ENCODE measurements at regions of chr1 and their contacts with region 1.

Region 1: DNA sequence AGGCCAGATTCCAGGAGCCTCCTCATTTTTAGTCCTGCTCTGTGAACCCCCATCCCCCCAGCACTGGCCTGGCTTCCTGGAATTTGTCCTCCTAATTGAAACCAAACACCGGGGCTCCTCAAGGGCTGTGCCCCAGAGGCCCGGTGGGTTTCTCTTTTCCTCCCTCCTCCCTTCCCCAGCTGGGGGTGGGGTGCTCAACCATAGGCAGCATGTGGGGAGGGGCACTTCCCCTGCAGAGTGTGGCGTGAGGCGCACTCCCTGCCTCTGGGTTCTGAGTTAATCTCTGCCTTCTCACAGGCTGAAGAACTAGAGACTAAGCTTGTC is 67.5 kb upstream of the ACOT11 start:
- DNase-seq: no peak
- ATAC-seq: peak; percentile 24

Region 2: GRCh38 chr1:54052934-54053744 is 427.3 kb before region 1 on chr1 and contains the starts of genes TCEANC2 and TMEM59:
- intact Hi-C with region 1: no loop called
- DNase-seq: peak; percentile 98
- ATAC-seq: peak; percentile 96
- total RNA-seq, gene TCEANC2: 4.7 TPM
- total RNA-seq, gene TMEM59: 318 TPM

Region 3: GRCh38 chr1:54417123-54417522 is 63.4 kb before region 1 on chr1:
- intact Hi-C with region 1: loop called (anchors 5 kb)
- DNase-seq: no peak
- ATAC-seq: peak; percentile 41